ENCODE measurements at regions of chr7 and their contacts with region 1.

Region 1: GRCh38 chr7:20310963-20311742 is 19.5 kb upstream of the ITGB8 start:
- DNase-seq: no peak
- H3K4me3 ChIP-seq: no peak overlapping the region
- CTCF ChIP-seq: peak; percentile 17

Region 2: GRCh38 chr7:19754521-19755116 is 556.5 kb before region 1 on chr7:
- CTCF ChIA-PET with region 1: interaction called, 10 read pairs
- POLR2A ChIA-PET with region 1: no interaction called
- DNase-seq: no peak
- H3K4me3 ChIP-seq: no peak overlapping the region
- CTCF ChIP-seq: peak; percentile 41

Region 3: GRCh38 chr7:19982841-19983835 is 328.0 kb before region 1 on chr7:
- CTCF ChIA-PET with region 1: interaction called, 14 read pairs
- POLR2A ChIA-PET with region 1: no interaction called
- DNase-seq: no peak
- H3K4me3 ChIP-seq: no peak overlapping the region
- CTCF ChIP-seq: peak; percentile 43

Region 4: DNA sequence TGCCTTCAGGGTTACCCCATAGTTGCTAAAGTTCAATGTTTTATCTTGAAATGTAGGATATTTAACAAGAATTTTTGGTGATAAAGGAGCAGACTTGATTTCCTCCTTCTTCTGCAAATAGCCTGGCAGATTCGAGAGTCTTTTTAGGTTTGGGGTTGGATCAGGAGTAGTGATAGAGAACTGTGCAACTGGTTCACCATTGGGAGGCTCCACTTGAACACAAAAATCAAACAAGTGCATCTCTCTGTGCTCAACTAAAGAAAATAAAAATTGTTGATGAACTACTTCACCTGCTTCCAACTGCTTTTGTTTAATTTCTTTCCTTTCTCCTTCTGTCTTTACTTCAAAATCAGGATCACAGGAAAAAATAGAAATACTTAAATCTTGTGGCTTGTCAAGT is 152.5 kb before region 1 on chr7:
- CTCF ChIA-PET with region 1: interaction called, 26 read pairs
- POLR2A ChIA-PET with region 1: no interaction called
- DNase-seq: no peak
- H3K4me3 ChIP-seq: no peak overlapping the region
- CTCF ChIP-seq: no peak

Region 5: DNA sequence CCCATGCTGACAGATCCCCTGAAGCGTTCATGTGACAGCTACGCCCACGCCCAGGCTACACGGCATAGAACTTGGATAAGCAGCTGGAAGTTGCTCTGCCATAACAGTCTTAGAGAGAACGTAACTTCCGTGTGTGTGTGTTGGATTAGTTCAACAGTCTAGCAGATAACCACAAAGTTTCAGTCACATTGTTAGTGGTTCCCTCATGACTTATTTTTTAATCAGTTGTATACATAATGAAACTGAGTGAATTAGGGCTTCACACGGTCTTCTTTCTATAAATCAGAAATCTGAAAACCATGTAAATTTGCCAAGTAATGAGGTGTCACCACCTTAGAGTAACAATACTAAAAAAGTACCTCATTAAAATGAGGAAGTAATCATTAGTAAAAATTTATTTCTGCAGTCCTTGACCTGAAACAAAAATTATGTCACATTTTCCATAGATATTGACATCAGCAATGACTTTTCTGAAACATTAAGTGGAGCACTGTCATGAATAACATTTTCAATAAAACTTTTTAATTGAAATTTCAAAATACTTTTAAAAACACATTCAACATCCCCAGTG is 72.3 kb before region 1 on chr7:
- CTCF ChIA-PET with region 1: no interaction called
- POLR2A ChIA-PET with region 1: no interaction called
- DNase-seq: no peak
- H3K4me3 ChIP-seq: no peak overlapping the region
- CTCF ChIP-seq: no peak

Region 6: DNA sequence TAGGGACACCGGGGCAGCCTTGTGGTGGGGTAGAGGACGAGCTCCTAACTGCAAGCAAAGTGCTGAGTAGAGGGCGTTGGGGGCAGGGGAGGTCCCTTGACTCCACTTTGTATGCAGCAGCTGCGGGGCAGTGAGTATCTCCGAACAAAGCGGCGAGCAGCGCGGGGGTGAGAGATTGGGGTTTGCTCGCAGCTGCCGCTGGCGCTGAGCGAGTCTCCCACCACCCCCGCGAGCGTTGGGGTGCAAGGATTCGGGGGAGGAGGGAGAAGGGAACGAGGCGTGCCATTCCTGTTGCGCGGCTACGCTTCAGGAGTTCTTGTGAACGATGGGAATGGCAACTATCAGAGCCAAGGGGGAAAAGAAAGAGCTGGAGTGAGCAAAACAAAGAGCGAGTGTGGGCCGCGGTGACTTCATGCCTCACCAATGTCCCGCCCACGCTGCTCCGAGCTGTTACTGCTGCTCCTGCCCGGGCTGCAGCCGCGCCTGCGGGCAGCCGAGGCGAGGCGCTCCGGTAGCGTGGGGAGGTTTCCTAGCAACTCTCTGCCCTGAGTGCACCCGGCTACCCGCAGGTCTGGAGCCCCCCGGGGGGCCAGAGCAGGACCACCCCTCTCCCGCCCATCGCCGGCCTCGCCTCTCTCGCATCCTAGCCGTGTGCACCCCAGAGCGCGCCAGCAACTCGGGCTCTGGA is 19.2 kb after region 1 on chr7 and contains the start of gene ITGB8:
- CTCF ChIA-PET with region 1: interaction called, 12 read pairs
- POLR2A ChIA-PET with region 1: no interaction called
- DNase-seq: peak; percentile 42
- H3K4me3 ChIP-seq: peak within 1 kb of the TSS; percentile 70
- CTCF ChIP-seq: no peak